Activated CD4-positive, alpha-beta memory T cell treated with anti-CD3 and anti-CD28 coated beads, Interleukin-2, amount 10 ng/mL, durations not matched to agents 7 days and 5 days (primary cell): ENCODE measurements at regions of chr11 and their contacts with region 1.

Region 1: GRCh38 chr11:108222686-108223448 is at the start of gene ATM:
- DNase-seq: peak; percentile 99
- H3K4me3 Mint-ChIP-seq: no peak within 1 kb of the TSS
- H3K27ac Mint-ChIP-seq: no peak within 1 kb of the TSS
- H3K4me1 Mint-ChIP-seq: peaks cover 53% of the 10 kb centered on the region
- H3K27me3 Mint-ChIP-seq: no peaks in the 10 kb centered on the region
- total RNA-seq, gene ATM: 130 to 144 TPM

Region 2: GRCh38 chr11:108117746-108118371 is 105.0 kb before region 1 on chr11:
- CTCF ChIA-PET with region 1: interaction called, 12 read pairs
- POLR2A ChIA-PET with region 1: interaction called, 23 read pairs
- DNase-seq: no peak
- H3K4me3 Mint-ChIP-seq: no peak overlapping the region
- H3K27ac Mint-ChIP-seq: no peak overlapping the region
- H3K4me1 Mint-ChIP-seq: peaks cover 25% of the 10 kb centered on the region
- H3K27me3 Mint-ChIP-seq: no peaks in the 10 kb centered on the region

Region 3: DNA sequence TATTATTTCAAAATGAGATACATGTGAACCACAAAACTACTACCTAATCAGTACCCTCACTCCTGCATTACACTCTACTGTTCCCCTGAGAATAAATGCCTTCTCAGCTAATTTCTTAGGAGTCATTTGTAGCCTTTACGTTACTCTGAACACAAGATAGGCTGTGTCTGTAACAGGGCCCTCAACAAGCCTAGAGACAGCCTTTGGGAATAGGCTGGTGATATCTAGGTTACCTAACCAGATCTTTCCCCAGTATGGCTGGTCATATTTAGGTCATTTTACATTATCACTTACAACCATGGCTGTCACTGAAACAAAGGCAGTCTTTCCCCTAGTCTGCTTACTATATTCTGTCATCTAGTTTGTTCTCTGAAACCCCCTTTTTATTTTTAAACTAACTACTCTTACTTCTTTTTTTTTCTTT is 14.2 kb after region 1 on chr11:
- CTCF ChIA-PET with region 1: interaction called, 27 read pairs
- POLR2A ChIA-PET with region 1: interaction called, 337 read pairs
- DNase-seq: no peak
- H3K4me3 Mint-ChIP-seq: peak overlapping the region; percentile 43
- H3K27ac Mint-ChIP-seq: peak overlapping the region; percentile 87
- H3K4me1 Mint-ChIP-seq: peaks cover 61% of the 10 kb centered on the region
- H3K27me3 Mint-ChIP-seq: no peaks in the 10 kb centered on the region

Region 4: DNA sequence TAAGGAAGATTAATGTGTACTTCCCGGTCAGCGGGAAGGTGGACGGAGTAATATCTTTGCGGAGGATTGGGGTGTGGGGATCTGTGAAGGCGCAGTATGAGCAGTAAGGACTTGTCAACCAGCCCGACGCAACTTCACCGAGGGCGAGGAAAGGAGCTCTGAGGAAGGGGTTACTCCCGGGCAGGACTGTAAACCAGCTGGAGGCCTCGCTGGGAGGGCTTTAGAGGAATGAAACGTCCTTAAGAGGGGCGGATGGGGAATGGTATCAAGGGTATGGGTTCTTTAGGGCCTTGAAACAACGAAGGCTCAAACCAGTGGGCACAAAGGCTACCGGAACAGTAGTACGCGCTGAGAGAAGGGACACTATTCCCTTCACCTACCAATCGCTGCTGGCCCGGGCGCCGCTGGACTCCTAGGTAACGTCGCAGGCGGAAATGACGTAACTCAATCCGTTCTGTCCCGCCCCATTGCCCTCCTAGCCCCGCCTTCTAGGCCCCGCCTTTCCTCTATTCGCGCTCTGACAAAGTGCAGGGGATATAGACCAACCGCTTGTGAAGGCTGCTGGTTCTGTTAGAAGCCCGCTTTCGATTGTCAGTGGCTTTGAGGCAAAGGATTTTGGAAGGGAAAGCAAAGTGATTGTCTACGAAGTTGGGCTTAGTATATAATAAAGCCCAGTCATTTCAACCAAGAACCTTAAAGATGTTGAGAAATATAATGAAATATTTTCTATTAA is 244.4 kb after region 1 on chr11 and contains the start of gene C11orf65:
- CTCF ChIA-PET with region 1: interaction called, 4 read pairs
- POLR2A ChIA-PET with region 1: interaction called, 22 read pairs
- DNase-seq: peak; percentile 96
- H3K4me3 Mint-ChIP-seq: peak within 1 kb of the TSS; percentile 99
- H3K27ac Mint-ChIP-seq: peak within 1 kb of the TSS; percentile 100
- H3K4me1 Mint-ChIP-seq: peaks cover 21% of the 10 kb centered on the region
- H3K27me3 Mint-ChIP-seq: no peaks in the 10 kb centered on the region
- total RNA-seq, gene C11orf65: 0.58 to 1.2 TPM

Region 5: DNA sequence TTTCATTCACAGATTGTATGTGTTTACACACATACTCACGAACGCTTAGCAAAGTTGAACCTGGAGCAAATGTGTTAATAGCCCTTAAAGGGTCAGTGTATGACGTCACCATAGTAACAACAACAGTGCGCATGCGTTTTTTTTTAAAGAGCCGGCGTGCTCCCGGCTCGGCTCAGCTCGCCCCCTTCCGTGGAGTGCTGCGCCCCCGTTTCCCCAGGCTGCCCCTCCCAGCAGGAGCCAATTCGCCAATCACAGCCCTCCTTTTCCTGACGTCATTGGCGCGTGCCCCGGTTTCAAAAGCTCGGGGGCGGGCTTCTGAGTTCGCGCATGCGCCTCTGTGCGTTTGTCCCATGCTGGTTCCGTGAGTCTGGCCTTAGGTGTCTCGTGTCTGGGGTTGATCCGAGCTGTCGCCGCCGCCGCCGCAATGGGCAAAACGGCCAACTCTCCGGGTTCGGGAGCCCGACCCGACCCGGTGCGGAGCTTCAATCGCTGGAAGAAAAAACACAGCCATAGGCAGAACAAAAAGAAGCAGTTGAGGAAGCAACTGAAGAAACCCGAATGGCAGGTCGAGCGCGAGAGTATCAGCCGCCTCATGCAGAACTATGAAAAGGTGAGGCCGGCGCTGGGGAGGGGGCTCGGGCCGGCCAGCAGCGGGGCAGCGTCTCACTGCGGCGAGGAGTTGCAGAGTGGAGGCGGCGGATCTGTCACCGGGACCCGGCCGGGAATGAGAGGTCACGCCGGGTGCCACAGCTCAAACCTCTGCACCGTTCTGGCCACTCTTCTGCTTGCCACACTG is 442.1 kb after region 1 on chr11 and contains the start of gene DDX10:
- CTCF ChIA-PET with region 1: interaction called, 3 read pairs
- POLR2A ChIA-PET with region 1: interaction called, 28 read pairs
- DNase-seq: peak; percentile 98
- H3K4me3 Mint-ChIP-seq: peak within 1 kb of the TSS; percentile 99
- H3K27ac Mint-ChIP-seq: peak within 1 kb of the TSS; percentile 66
- H3K4me1 Mint-ChIP-seq: peaks cover 32% of the 10 kb centered on the region
- H3K27me3 Mint-ChIP-seq: no peaks in the 10 kb centered on the region
- total RNA-seq, gene DDX10: 20.5 to 23.2 TPM